GM13977 (cell line): ENCODE measurements at regions of chr3 and their contacts with region 1.

Region 1: DNA sequence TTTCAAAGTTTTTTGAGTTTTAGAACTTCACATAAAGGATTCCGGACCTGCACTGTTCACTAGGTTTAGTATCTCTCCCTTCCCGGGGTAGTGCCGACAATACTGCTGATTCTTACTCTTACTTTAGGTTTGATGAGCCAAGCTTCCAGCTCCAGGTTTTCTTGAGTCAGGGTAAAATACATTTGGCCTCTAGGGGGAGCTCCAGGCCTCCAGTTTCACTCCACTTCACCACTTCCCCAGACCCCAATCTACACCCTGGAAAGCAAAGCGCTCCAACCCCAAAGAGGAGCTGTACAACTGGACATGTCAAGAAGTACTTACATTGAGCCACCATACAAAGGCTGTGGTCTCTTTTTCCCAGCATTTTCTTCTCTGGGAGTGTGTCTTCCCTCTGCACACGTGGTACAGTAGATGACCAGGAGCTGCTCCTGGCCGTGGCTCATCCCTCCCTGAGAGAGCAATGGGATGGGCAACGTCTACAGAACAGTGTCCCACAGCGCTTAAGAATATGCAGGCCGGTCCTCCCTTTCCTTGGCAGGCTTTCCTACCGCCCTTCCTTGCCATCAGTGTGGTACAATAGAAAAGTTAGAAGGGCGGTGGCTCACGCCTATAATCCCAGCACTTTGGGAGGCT is 93.9 kb upstream of the CCDC80 start:
- DNase-seq: peak; percentile 52
- CTCF ChIP-seq: peak; percentile 72

Region 2: GRCh38 chr3:112642912-112643506 is 91.8 kb before region 1 on chr3:
- in situ Hi-C with region 1: loop called (anchors 10 kb)
- DNase-seq: peak; percentile 83
- CTCF ChIP-seq: peak; percentile 88

Region 3: GRCh38 chr3:112979240-112979832 is 244.5 kb after region 1 on chr3:
- in situ Hi-C with region 1: loop called (anchors 10 kb)
- DNase-seq: no peak
- CTCF ChIP-seq: peak; percentile 48